CD4-positive, alpha-beta T cell (primary cell): ENCODE measurements at regions of chr13 and their contacts with region 1.

Region 1: GRCh38 chr13:91375116-91375729 is 23.2 kb upstream of the GPC5 start:
- DNase-seq: peak in 4 of 14 experiments; percentile 12 to 44 (median 31)
- ATAC-seq: peak; percentile 65
- H3K4me3 ChIP-seq: no peak overlapping the region
- H3K4me3 Mint-ChIP-seq: no peak overlapping the region
- H3K27ac ChIP-seq: no peak overlapping the region
- H3K27ac Mint-ChIP-seq: no peak overlapping the region
- H3K4me1 ChIP-seq: no peaks in the 10 kb centered on the region
- H3K4me1 Mint-ChIP-seq: no peaks in the 10 kb centered on the region
- H3K27me3 ChIP-seq: no peaks in the 10 kb centered on the region
- H3K27me3 Mint-ChIP-seq: peaks cover 12% of the 10 kb centered on the region
- CTCF ChIP-seq: peak; percentile 44

Region 2: DNA sequence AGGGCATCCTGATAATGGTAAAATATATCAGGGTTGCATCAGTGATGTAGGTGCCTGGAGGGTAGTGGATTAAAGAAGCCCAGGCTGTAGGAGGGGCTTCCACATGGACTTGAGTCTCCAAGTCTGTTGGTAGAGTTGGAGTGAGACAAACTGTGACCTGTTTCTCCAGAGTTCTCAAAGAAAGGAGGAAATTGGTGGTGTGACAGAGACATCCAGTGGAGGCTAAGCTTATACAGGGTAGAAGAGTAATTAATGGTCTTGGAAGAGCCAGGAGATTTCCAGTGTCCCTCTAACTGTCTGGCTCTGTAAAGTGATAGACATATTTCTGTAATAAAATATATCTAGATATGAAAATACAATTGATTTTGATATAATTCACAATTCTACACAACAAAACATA is 84.3 kb after region 1 on chr13:
- CTCF ChIA-PET with region 1: no interaction called
- POLR2A ChIA-PET with region 1: no interaction called
- intact Hi-C with region 1: loop called in 1 of 2 experiments (anchors 10 kb)
- DNase-seq: peak in 3 of 14 experiments; percentile 2 to 28 (median 11)
- ATAC-seq: no peak
- H3K4me3 ChIP-seq: no peak overlapping the region
- H3K4me3 Mint-ChIP-seq: no peak overlapping the region
- H3K27ac ChIP-seq: no peak overlapping the region
- H3K27ac Mint-ChIP-seq: no peak overlapping the region
- H3K4me1 ChIP-seq: no peaks in the 10 kb centered on the region
- H3K4me1 Mint-ChIP-seq: no peaks in the 10 kb centered on the region
- H3K27me3 ChIP-seq: no peaks in the 10 kb centered on the region
- H3K27me3 Mint-ChIP-seq: peaks cover 11% of the 10 kb centered on the region
- CTCF ChIP-seq: no peak

Region 3: GRCh38 chr13:91491984-91492383 is 116.8 kb after region 1 on chr13:
- CTCF ChIA-PET with region 1: no interaction called
- POLR2A ChIA-PET with region 1: no interaction called
- intact Hi-C with region 1: no loop called
- DNase-seq: no peak
- ATAC-seq: no peak
- H3K4me3 ChIP-seq: no peak overlapping the region
- H3K4me3 Mint-ChIP-seq: no peak overlapping the region
- H3K27ac ChIP-seq: no peak overlapping the region
- H3K27ac Mint-ChIP-seq: no peak overlapping the region
- H3K4me1 ChIP-seq: no peaks in the 10 kb centered on the region
- H3K4me1 Mint-ChIP-seq: no peaks in the 10 kb centered on the region
- H3K27me3 ChIP-seq: no peaks in the 10 kb centered on the region
- H3K27me3 Mint-ChIP-seq: no peaks in the 10 kb centered on the region
- CTCF ChIP-seq: no peak

Region 4: GRCh38 chr13:91722267-91722884 is 347.2 kb after region 1 on chr13:
- CTCF ChIA-PET with region 1: no interaction called
- POLR2A ChIA-PET with region 1: no interaction called
- intact Hi-C with region 1: loop called (anchors 2 to 5 kb)
- DNase-seq: peak in 3 of 14 experiments; percentile 21 to 33 (median 29)
- ATAC-seq: no peak
- H3K4me3 ChIP-seq: no peak overlapping the region
- H3K4me3 Mint-ChIP-seq: no peak overlapping the region
- H3K27ac ChIP-seq: no peak overlapping the region
- H3K27ac Mint-ChIP-seq: no peak overlapping the region
- H3K4me1 ChIP-seq: no peaks in the 10 kb centered on the region
- H3K4me1 Mint-ChIP-seq: no peaks in the 10 kb centered on the region
- H3K27me3 ChIP-seq: no peaks in the 10 kb centered on the region
- H3K27me3 Mint-ChIP-seq: no peaks in the 10 kb centered on the region
- CTCF ChIP-seq: peak; percentile 81